Dendritic cell treated with granulocyte-macrophage colony-stimulating factor and Interleukin-4, amounts not matched to agents 40 ng/mL and 50 ng/mL, for 4 days (primary cell): ENCODE measurements at regions of chr19 and their contacts with region 1.

Region 1: DNA sequence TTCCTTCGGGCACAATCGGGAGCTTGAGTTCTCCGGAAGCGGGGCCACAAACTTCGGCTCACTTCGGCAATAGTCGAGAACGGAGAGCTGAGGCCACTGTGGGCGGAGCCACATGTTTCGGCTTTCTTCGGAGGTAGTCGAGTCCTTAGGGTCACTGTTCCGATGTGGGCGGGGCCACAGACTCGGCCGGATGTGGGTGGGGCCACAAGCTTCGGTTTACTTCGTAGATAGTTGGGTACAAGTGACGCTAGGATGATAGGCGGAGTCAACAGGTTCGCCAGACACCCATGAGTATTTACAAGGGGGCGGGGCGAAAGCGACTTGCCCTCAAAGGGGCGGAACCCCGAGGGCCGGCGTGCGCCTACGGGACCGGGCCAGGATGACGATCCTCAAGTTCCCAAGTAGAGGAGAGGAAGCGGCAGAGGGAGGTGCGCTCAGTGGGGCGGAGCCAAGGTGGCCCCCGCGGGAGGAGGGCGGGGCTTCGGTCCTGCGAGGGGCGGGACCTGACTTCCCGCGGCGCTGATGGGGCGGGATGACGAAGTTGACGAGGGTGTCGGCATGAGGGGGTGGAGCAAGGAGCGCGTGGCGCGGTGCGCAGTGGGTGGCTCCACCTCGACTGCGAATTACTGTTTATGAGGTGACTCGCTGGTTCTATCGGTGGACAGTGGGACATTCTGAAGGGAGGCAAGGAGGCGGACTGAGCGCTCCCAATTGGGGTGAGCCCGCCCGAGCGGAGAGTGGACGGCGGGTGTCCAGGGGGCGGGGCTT is 539 bp upstream of the MBOAT7 start:
- H3K4me3 Mint-ChIP-seq: peak overlapping the region; percentile 77
- H3K27ac Mint-ChIP-seq: peak overlapping the region; percentile 97
- H3K4me1 Mint-ChIP-seq: peaks cover 44% of the 10 kb centered on the region
- H3K27me3 Mint-ChIP-seq: no peaks in the 10 kb centered on the region

Region 2: DNA sequence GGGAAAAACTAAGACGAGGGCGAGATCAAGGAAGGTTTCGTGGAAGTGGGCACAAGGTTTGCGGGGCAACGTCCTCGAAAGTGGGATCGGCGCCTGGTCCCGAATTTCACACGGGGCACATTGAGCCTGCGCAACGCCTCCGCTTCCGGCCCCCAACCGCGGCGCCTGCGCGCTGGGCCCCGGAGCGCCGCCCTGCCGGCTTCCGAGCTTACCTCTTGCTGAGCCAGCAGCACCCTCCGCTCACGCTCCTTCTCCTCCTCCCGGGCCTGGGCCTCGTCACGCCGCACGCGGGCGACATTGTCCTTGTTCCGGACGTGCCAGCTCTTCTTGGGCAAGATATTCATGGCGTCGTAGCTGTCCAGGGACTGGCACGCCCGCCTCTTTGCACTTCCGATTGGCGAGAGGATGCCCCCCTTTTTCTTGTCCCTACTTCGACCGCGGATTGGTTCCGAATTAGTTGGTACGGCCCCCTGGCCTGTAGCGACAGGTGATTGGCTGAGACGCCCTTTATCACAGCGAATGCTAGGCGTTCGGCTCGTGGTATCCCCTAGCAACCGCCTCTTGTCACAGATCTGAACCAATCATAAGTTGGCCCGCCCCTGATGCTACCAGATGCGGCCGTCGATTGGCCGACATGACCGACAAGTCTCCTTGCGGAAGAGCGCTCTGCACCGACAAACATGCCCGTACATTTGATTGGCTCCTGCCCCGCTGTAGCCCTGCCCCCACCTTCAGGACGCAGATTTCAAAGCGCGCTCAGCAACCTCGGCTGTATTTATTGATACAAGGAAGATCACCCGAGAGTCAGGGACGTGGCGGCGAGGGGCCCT is 30.4 kb before region 1 on chr19 and contains the start of gene LENG1:
- intact Hi-C with region 1: loop called (anchors 1 kb)
- H3K4me3 Mint-ChIP-seq: peak within 1 kb of the TSS; percentile 90
- H3K27ac Mint-ChIP-seq: peak within 1 kb of the TSS; percentile 97
- H3K4me1 Mint-ChIP-seq: peaks cover 70% of the 10 kb centered on the region
- H3K27me3 Mint-ChIP-seq: peaks cover 7% of the 10 kb centered on the region

Region 3: DNA sequence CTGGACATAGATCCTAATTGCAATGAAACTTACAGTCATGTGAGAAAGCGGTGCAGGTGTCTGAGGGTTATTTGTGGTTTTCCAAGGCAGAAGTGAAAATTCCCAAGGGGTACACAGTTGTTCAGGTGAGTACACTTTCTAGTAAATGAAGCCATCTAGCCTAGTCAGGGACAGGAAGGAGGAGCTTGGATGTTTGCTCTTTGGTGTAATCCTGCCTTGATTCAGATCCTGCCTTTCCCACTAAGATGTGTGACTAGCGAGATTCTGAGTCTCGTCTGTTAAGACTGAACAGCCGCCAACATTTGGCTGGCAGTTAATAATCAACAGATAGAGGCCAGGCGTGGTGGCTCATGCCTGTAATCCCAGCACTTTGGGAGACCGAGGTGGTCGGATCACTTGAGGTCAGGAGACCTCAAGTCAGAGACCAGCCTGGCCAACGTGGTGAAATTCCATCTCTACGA is 13.3 kb after region 1 on chr19:
- intact Hi-C with region 1: loop called (anchors 1 kb)
- H3K4me3 Mint-ChIP-seq: peak overlapping the region; percentile 66
- H3K27ac Mint-ChIP-seq: peak overlapping the region; percentile 94
- H3K4me1 Mint-ChIP-seq: peaks cover 76% of the 10 kb centered on the region
- H3K27me3 Mint-ChIP-seq: no peaks in the 10 kb centered on the region